ENCODE measurements at regions of chr18 and their contacts with region 1.

Region 1: DNA sequence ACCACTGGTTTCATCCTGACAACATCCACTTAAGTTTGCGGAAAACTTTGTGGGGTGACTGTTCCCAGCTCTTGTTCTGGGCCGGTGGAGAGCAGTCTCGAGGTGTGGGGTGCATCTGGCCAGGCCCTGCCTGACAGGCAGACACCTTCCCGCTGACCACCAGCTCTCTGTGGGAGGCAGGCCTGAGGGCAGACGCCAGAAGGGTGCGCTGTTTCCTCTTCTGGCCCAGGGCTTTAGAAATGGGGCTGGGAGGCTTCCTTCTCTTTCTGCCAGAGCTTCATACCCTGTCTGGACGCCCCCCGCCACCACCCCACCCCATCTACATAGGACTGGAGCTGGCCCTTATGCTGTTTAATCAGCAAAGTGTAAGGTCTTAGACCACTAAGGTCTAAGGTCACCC is 263.8 kb downstream of the LOXHD1 start:
- DNase-seq: peak in 1 of 2 experiments; percentile 88
- H3K4me3 ChIP-seq: no peak overlapping the region
- H3K27ac ChIP-seq: no peak overlapping the region
- H3K4me1 ChIP-seq: no peaks in the 10 kb centered on the region; a peak in 1 of 7 replicates
- H3K27me3 ChIP-seq: no peaks in the 10 kb centered on the region; a peak in 1 of 7 replicates
- CTCF ChIP-seq: peak; percentile 85 to 92 (median 86)
- EP300 ChIP-seq: no peak
- POLR2A ChIP-seq: no peak
- RAD21 ChIP-seq: peak; percentile 84

Region 2: GRCh38 chr18:46130061-46130460 is 263.2 kb before region 1 on chr18:
- CTCF ChIA-PET with region 1: no interaction called
- POLR2A ChIA-PET with region 1: no interaction called
- DNase-seq: no peak
- H3K4me3 ChIP-seq: no peak overlapping the region
- H3K27ac ChIP-seq: no peak overlapping the region
- H3K4me1 ChIP-seq: peaks cover 0 to 3% (median 2%) of the 10 kb centered on the region in 4 experiments; a peak in 1 of 7 replicates
- H3K27me3 ChIP-seq: no peaks in the 10 kb centered on the region
- CTCF ChIP-seq: no peak
- EP300 ChIP-seq: no peak
- POLR2A ChIP-seq: no peak
- RAD21 ChIP-seq: no peak

Region 3: GRCh38 chr18:46329736-46330246 is 63.4 kb before region 1 on chr18:
- CTCF ChIA-PET with region 1: no interaction called
- POLR2A ChIA-PET with region 1: no interaction called
- DNase-seq: no peak
- H3K4me3 ChIP-seq: no peak overlapping the region
- H3K27ac ChIP-seq: no peak overlapping the region
- H3K4me1 ChIP-seq: peaks cover 0 to 12% (median 9%) of the 10 kb centered on the region in 4 experiments; a peak in 6 of 7 replicates
- H3K27me3 ChIP-seq: peaks cover 0 to 21% (median 14%) of the 10 kb centered on the region in 4 experiments; a peak in 5 of 7 replicates
- CTCF ChIP-seq: no peak
- EP300 ChIP-seq: no peak
- POLR2A ChIP-seq: no peak
- RAD21 ChIP-seq: no peak

Region 4: GRCh38 chr18:46369323-46369722 is 23.9 kb before region 1 on chr18:
- CTCF ChIA-PET with region 1: interaction called, 42 read pairs
- POLR2A ChIA-PET with region 1: no interaction called
- DNase-seq: no peak
- H3K4me3 ChIP-seq: no peak overlapping the region
- H3K27ac ChIP-seq: no peak overlapping the region
- H3K4me1 ChIP-seq: peaks cover 0 to 9% (median 0%) of the 10 kb centered on the region in 4 experiments; a peak in 1 of 7 replicates
- H3K27me3 ChIP-seq: no peaks in the 10 kb centered on the region
- CTCF ChIP-seq: peak; percentile 48 to 79 (median 68)
- EP300 ChIP-seq: no peak
- POLR2A ChIP-seq: no peak
- RAD21 ChIP-seq: peak; percentile 60 to 67

Region 5: DNA sequence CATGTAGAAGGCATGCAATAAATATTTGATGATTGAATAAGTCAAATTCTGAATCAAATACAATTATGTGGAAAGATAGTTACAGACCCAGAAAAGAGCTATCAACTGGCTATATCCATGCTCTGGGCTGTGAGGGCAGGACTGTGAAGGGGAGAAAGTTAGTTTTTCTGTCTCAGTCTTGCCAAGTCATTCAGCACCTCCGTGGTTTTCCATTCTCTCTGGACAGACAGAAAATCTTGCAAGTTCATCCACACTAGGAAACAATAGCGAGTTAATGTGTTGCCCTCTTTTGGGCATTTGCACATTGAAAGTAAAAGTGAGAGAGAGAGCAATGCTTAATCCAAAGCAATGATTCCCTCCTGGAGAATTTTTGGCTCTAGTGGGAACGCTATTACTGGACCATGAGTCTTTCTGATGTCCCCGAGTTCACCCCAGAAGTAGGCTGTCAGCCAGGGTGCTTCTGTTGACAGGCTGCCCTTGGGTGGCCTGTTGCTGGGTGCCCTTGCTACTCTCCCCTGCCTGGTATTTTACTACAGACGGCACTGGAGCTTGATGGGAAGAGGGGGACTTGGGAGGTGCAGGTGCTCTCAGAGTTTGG is 25.5 kb after region 1 on chr18:
- CTCF ChIA-PET with region 1: interaction called, 16 read pairs
- POLR2A ChIA-PET with region 1: no interaction called
- DNase-seq: no peak
- H3K4me3 ChIP-seq: no peak overlapping the region
- H3K27ac ChIP-seq: no peak overlapping the region
- H3K4me1 ChIP-seq: peaks cover 14 to 27% (median 21%) of the 10 kb centered on the region in 4 experiments
- H3K27me3 ChIP-seq: no peaks in the 10 kb centered on the region; a peak in 1 of 7 replicates
- CTCF ChIP-seq: no peak
- EP300 ChIP-seq: no peak
- POLR2A ChIP-seq: no peak
- RAD21 ChIP-seq: no peak

Region 6: GRCh38 chr18:46462523-46462922 is 69.3 kb after region 1 on chr18:
- CTCF ChIA-PET with region 1: interaction called, 23 read pairs
- POLR2A ChIA-PET with region 1: no interaction called
- DNase-seq: no peak
- H3K4me3 ChIP-seq: no peak overlapping the region
- H3K27ac ChIP-seq: no peak overlapping the region
- H3K4me1 ChIP-seq: peaks cover 10 to 25% (median 17%) of the 10 kb centered on the region in 4 experiments
- H3K27me3 ChIP-seq: no peaks in the 10 kb centered on the region
- CTCF ChIP-seq: no peak
- EP300 ChIP-seq: no peak
- POLR2A ChIP-seq: no peak
- RAD21 ChIP-seq: no peak

Region 7: DNA sequence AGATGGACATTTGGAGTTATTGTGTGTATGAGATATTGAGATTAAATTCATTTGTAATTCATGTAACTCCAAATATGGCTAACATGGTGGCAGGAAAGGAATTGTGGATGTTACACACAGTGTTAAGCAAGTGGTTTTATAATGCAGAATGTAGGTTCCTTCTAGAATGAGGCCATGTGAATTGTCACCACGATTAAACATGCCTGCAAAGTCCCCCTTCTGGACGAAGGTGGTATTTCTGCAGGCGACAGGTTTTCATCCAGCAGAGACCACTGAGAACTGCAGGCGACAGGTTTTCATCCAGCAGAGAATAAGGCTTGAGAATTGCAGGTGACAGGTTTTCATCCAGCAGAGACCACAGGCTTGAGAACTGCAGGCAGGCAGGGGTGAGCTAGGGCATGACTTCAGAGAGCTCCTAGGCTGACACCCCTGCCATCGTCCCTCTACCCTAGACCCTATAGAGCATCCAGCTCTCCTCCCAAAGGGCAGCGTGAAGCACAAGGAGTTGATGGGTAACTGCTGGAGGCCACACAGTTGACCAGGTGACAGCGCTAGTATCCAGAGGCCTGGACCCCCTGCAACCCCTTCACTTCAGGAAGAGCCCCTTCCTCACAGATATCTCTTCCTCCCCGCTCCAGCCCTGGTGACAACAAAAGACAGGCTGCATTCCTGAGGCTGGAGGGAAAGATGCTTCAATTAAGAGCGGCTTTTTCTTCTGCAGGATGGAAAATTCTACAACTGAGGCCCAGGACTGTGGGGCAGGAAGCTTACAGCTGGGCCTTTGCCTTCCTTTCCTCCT is 88.0 kb after region 1 on chr18:
- CTCF ChIA-PET with region 1: interaction called, 56 read pairs
- POLR2A ChIA-PET with region 1: interaction called, 3 read pairs
- DNase-seq: peak in 1 of 2 experiments; percentile 87
- H3K4me3 ChIP-seq: no peak overlapping the region
- H3K27ac ChIP-seq: no peak overlapping the region
- H3K4me1 ChIP-seq: peaks cover 5 to 15% (median 10%) of the 10 kb centered on the region in 4 experiments; a peak in 6 of 7 replicates
- H3K27me3 ChIP-seq: 0 out of 7 replicates have a peak, but pooled peaks cover 0 to 3% (median 0%) of the 10 kb centered on the region in 4 experiments
- CTCF ChIP-seq: peak; percentile 53 to 84 (median 83)
- EP300 ChIP-seq: no peak
- POLR2A ChIP-seq: no peak
- RAD21 ChIP-seq: peak; percentile 62 to 80

Region 8: GRCh38 chr18:46518438-46518837 is 125.2 kb after region 1 on chr18:
- CTCF ChIA-PET with region 1: interaction called, 41 read pairs
- POLR2A ChIA-PET with region 1: no interaction called
- DNase-seq: no peak
- H3K4me3 ChIP-seq: no peak overlapping the region
- H3K27ac ChIP-seq: no peak overlapping the region
- H3K4me1 ChIP-seq: no peaks in the 10 kb centered on the region
- H3K27me3 ChIP-seq: no peaks in the 10 kb centered on the region; a peak in 2 of 7 replicates
- CTCF ChIP-seq: peak; percentile 26 to 63 (median 47)
- EP300 ChIP-seq: no peak
- POLR2A ChIP-seq: no peak
- RAD21 ChIP-seq: peak; percentile 52 to 73

Region 9: GRCh38 chr18:46891742-46892214 is 498.5 kb after region 1 on chr18:
- CTCF ChIA-PET with region 1: no interaction called
- POLR2A ChIA-PET with region 1: no interaction called
- DNase-seq: no peak
- H3K4me3 ChIP-seq: no peak overlapping the region
- H3K27ac ChIP-seq: no peak overlapping the region
- H3K4me1 ChIP-seq: no peaks in the 10 kb centered on the region
- H3K27me3 ChIP-seq: no peaks in the 10 kb centered on the region
- CTCF ChIP-seq: no peak
- EP300 ChIP-seq: no peak
- POLR2A ChIP-seq: no peak
- RAD21 ChIP-seq: no peak